Panc1 (cell line): ENCODE measurements at regions of chr12 and their contacts with region 1.

Region 1: GRCh38 chr12:11607313-11608081 is 42.0 kb upstream of the ETV6 start:
- DNase-seq: no peak
- ATAC-seq: no peak
- H3K4me3 ChIP-seq: no peak overlapping the region
- H3K27ac ChIP-seq: no peak overlapping the region
- H3K4me1 ChIP-seq: no peaks in the 10 kb centered on the region
- H3K27me3 ChIP-seq: no peaks in the 10 kb centered on the region
- CTCF ChIP-seq: no peak

Region 2: DNA sequence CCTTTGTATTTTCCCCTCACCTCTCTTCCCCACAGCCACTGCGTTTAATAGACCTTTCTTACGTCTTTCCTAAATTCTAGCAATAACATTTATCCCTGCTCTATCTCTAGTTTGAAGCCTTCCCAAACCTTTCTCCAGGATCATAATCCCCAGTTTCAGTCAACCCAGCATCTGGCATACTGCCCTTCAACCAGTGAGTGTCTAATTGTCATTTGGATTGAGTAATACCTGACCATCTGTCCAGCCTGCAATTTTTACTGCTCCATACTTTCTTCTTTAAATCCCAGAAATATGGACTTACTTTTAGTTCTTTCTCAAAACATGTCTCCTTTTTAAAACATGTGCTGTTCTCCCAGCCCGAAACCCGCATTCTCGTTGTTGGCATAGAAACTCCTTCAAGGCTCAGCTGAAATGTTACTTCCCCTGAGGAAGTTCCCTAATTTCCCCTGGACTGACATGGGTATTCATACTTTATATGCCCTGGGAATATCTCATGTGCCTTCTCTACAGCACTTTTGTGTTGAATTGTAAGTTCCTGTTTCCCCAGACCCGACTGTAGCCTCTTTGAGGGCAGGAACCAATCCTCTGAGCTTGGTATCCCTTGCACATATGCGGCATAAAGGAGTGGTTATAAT is 23.2 kb before region 1 on chr12:
- CTCF ChIA-PET with region 1: no interaction called
- POLR2A ChIA-PET with region 1: no interaction called
- in situ Hi-C with region 1: no loop called
- intact Hi-C with region 1: no loop called
- DNase-seq: no peak
- ATAC-seq: no peak
- H3K4me3 ChIP-seq: no peak overlapping the region
- H3K27ac ChIP-seq: no peak overlapping the region
- H3K4me1 ChIP-seq: no peaks in the 10 kb centered on the region
- H3K27me3 ChIP-seq: no peaks in the 10 kb centered on the region
- CTCF ChIP-seq: no peak

Region 3: DNA sequence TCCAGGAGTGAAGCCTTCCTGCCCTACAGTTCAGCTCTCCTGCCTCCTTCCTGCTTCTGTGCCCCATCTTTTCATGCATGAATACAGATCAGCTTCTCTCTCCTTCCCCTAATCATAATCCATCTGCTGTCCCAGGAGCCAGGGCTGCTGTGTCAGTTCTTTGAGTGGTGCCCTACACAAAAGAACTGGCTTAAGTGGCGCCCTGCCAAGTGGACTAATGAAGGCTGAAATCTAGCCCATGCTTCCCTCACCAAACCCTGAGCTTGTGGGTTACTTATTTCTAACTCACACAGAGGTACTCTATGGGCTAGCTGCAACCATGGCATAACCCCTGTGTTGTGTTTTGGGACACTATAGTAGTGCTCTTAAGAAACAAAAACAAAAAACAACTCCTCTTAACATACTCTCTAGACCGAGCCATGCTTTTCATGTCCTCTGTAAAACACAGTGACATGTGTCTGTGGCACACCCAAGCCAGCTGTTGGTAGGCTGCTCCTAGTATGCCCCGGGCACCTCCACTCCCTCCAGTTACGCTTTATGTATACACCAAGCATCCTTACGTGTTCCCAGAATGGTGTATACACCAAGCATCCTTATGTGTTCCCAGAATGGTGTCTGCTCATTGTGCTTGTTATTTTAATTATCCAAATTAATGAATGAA is 22.7 kb after region 1 on chr12:
- CTCF ChIA-PET with region 1: no interaction called
- POLR2A ChIA-PET with region 1: no interaction called
- in situ Hi-C with region 1: no loop called
- intact Hi-C with region 1: no loop called
- DNase-seq: no peak
- ATAC-seq: no peak
- H3K4me3 ChIP-seq: no peak overlapping the region
- H3K27ac ChIP-seq: no peak overlapping the region
- H3K4me1 ChIP-seq: no peaks in the 10 kb centered on the region
- H3K27me3 ChIP-seq: no peaks in the 10 kb centered on the region
- CTCF ChIP-seq: no peak

Region 4: DNA sequence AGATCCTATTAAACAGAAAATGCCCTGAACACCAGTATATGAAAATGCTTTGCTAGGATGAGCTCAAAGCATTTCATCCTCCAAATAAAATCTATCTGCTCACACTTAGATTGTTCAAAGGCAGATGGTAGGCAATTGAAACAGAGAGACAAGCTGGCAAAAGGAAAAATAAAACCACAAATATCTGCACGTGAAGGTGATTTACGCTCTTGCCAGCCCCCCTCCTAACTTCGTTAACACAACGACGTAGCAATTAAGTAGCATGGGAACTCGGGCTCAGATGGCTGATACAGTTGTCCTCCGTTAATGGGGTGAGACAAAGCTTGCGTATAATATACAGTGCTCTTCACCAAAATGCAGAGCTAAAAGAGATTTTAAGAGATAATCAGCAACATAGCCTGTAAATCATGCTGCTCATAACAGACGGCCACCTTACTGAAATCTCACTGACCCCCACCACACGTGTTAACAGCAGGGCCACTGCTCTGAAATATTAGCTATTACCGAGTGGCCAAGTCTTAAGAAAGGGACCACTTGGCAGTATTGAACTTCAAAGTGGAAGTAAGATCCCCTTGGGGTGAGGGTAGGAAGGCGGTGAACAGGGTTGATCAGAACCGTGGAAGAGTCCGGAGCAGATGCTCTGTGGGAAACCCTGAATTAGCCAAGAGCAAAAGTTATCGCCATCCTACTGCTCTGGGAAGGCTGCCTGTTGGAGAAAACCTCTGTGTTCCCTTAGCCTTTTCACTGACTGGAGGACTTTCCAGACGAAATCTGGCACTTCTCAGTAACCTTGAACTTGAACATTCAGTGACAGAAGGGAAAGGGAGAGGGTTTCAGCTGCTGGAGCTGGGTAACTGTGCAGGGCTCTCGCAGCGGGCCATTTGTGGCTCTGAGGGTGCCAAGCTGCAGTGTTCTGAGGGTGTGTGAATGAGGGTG is 65.0 kb after region 1 on chr12:
- CTCF ChIA-PET with region 1: interaction called, 10 read pairs
- POLR2A ChIA-PET with region 1: no interaction called
- in situ Hi-C with region 1: no loop called
- intact Hi-C with region 1: no loop called
- DNase-seq: no peak
- ATAC-seq: no peak
- H3K4me3 ChIP-seq: no peak overlapping the region
- H3K27ac ChIP-seq: no peak overlapping the region
- H3K4me1 ChIP-seq: peaks cover 7% of the 10 kb centered on the region; the same call in 1 of the 2 replicates
- H3K27me3 ChIP-seq: no peaks in the 10 kb centered on the region
- CTCF ChIP-seq: no peak